ENCODE measurements at regions of chr20 and their contacts with region 1.

Region 1: GRCh38 chr20:23050847-23051631 is 1.6 kb upstream of the THBD start:
- DNase-seq: peak; percentile 87 to 90
- ATAC-seq: peak; percentile 50 to 82 (median 67)
- H3K4me3 ChIP-seq: peak overlapping the region; percentile 50 to 82 (median 70)
- H3K27ac ChIP-seq: peak overlapping the region; percentile 87 to 97 (median 92)
- H3K4me1 ChIP-seq: peaks cover 6 to 59% (median 50%) of the 10 kb centered on the region in 9 donors
- H3K27me3 ChIP-seq: peaks cover 0 to 54% (median 25%) of the 10 kb centered on the region in 7 donors
- CTCF ChIP-seq: peak; percentile 55 to 87 (median 79)

Region 2: DNA sequence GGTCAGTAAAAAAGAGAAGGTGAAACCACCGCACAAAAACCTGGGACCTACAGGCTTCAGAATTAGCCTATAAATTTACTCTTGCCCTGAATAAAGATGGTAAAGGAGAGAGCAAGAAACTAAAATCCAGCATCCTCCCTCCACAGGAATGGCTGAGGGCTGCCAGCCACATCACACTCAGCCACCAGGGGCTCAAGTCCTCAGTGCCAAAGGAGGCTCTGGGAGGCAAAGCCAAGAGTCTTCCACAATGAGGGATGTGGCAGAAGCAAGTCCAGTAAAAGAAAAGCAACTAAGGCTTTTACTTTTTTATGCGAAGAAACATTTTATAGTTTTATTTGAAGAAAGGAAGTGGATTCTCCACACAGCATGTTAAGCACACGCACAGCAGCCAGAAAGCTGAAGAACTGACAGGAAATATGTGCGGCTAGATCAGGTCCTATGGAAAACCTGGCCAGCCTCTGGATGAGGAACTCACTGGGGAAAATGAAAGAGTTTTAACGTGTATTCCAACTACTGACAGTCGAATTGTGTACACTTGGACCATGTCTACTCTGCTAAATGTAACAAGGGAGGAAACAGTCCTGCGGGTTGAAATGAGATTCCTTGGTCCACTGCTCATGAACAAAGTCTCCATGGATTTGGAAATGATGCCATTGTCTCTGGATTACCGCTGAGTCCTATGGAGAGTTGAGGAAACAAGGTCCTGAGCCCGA is 235.3 kb before region 1 on chr20:
- intact Hi-C with region 1: no loop called
- DNase-seq: no peak
- ATAC-seq: peak in 1 of 8 donors; percentile 45
- H3K4me3 ChIP-seq: no peak overlapping the region
- H3K27ac ChIP-seq: no peak overlapping the region
- H3K4me1 ChIP-seq: peaks cover 0 to 8% (median 0%) of the 10 kb centered on the region in 9 donors
- H3K27me3 ChIP-seq: peaks cover 0 to 7% (median 0%) of the 10 kb centered on the region in 7 donors
- CTCF ChIP-seq: peak in 4 of 9 donors; percentile 17 to 27 (median 22)

Region 3: DNA sequence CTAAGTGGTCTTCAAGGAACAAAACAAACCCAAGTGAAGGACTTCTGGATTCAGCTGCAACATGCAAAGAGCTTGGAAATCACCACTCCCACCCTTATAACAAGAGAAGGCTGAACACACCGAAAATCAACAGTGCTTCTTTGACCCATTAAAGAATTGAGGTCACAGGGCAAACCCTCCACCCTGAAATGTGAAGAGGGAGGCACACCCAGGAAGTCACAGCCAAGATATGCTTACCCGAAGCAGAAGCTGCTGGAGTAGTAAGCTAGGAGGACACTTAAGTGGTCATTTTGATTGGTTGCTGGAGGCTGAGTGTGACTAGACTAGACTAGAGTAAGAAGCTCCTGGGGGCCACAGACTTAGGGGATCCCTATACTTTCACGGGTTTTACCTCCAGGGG is 204.2 kb before region 1 on chr20:
- intact Hi-C with region 1: loop called in 1 of 10 experiments (anchors 5 kb)
- DNase-seq: no peak
- ATAC-seq: no peak
- H3K4me3 ChIP-seq: no peak overlapping the region
- H3K27ac ChIP-seq: no peak overlapping the region
- H3K4me1 ChIP-seq: no peaks in the 10 kb centered on the region
- H3K27me3 ChIP-seq: peaks cover 0 to 5% (median 0%) of the 10 kb centered on the region in 7 donors
- CTCF ChIP-seq: no peak

Region 4: DNA sequence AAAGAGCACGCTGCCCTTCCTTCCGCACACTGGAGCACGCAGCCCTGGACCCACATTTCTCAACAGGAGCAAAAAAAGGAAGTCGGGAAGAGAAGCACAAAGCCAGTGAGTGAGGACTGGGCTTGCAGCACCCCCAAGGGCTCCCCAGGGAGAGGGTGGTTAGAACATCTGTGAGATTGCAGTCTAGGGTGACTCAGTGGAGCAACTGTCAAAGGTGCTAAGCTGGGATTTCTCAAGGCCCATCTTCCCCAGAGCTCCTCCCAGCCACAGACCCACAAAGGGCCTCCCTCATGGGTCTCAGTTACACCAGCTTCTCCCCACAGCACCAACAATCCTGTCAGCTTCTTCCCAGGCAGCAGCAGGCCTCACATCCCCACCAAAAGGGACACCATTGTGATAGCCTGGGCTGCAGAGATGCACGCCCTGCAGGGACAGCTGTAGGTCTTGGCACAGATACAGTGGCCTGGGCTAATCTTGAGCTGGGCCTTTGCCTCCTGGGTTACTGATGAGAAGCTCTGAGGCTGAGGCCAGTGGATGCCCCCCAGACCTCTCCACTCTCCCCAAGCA is 74.7 kb after region 1 on chr20:
- intact Hi-C with region 1: loop called in 1 of 10 experiments (anchors 10 kb)
- DNase-seq: no peak
- ATAC-seq: peak in 7 of 8 donors; percentile 45 to 71 (median 61)
- H3K4me3 ChIP-seq: no peak overlapping the region
- H3K27ac ChIP-seq: peak overlapping the region in 5 of 10 donors; percentile 39 to 87 (median 64)
- H3K4me1 ChIP-seq: peaks cover 2 to 65% (median 38%) of the 10 kb centered on the region in 9 donors
- H3K27me3 ChIP-seq: no peaks in the 10 kb centered on the region
- CTCF ChIP-seq: no peak

Region 5: DNA sequence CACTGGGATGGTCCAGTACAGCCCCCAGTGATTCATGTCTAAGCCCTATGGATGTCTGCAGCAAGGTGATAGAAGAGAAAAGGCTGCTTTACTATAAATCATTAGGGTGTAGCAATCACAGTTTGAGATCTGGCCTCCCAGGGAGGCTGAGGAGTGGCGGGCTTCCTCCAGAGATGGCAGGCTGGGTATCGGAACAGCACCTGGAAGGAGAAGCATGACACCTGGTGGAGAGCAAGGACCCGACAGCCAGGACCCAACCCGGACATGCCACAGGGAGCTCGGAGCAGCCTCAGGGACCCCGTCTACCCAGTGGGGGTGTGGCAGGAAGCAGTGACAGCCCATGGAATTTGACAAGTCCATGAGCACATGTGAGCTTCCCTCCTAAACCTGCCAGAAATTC is 149.9 kb after region 1 on chr20:
- intact Hi-C with region 1: loop called in 2 of 10 experiments (anchors 5 to 10 kb)
- DNase-seq: peak; percentile 33 to 48
- ATAC-seq: peak in 7 of 8 donors; percentile 33 to 58 (median 38)
- H3K4me3 ChIP-seq: no peak overlapping the region
- H3K27ac ChIP-seq: no peak overlapping the region
- H3K4me1 ChIP-seq: peaks cover 12 to 54% (median 44%) of the 10 kb centered on the region in 9 donors
- H3K27me3 ChIP-seq: no peaks in the 10 kb centered on the region
- CTCF ChIP-seq: peak; percentile 16 to 59 (median 48)

Region 6: GRCh38 chr20:23245553-23246181 is 194.6 kb after region 1 on chr20:
- intact Hi-C with region 1: loop called in 1 of 10 experiments (anchors 5 kb)
- DNase-seq: peak; percentile 70 to 73
- ATAC-seq: peak; percentile 64 to 85 (median 79)
- H3K4me3 ChIP-seq: no peak overlapping the region
- H3K27ac ChIP-seq: peak overlapping the region in 7 of 10 donors; percentile 39 to 77 (median 70)
- H3K4me1 ChIP-seq: peaks cover 0 to 31% (median 22%) of the 10 kb centered on the region in 9 donors
- H3K27me3 ChIP-seq: peaks cover 0 to 13% (median 0%) of the 10 kb centered on the region in 7 donors
- CTCF ChIP-seq: peak; percentile 20 to 70 (median 63)

Region 7: GRCh38 chr20:23350196-23350903 is 299.3 kb after region 1 on chr20 and contains the start of gene NXT1:
- intact Hi-C with region 1: loop called in 5 of 10 experiments (anchors 5 to 10 kb)
- DNase-seq: peak; percentile 97 to 98
- ATAC-seq: peak; percentile 93 to 97 (median 96)
- H3K4me3 ChIP-seq: peak within 1 kb of the TSS; percentile 78 to 97 (median 86)
- H3K27ac ChIP-seq: peak within 1 kb of the TSS; percentile 88 to 100 (median 98)
- H3K4me1 ChIP-seq: peaks cover 3 to 29% (median 24%) of the 10 kb centered on the region in 9 donors
- H3K27me3 ChIP-seq: no peaks in the 10 kb centered on the region
- CTCF ChIP-seq: no peak
- total RNA-seq, gene NXT1: 4.5 to 12.9 (median 6.5) TPM

Measured in heart right ventricle (tissue), 16 donors.